Activated T-helper 2 cell treated with anti-CD3 and anti-CD28 coated beads, Interferon-gamma antibody, Interleukin-2, Interleukin-4, amounts not matched to agents 10 μg/mL and 5 μg/mL and 100 μg/mL, durations not matched to agents 14 hours and 24 hours and 36 hours (primary cell): ENCODE measurements at regions of chr16 and their contacts with region 1.

Region 1: GRCh38 chr16:89860747-89861304 is 12.6 kb upstream of the TCF25 start:
- DNase-seq: peak; percentile 75
- H3K4me3 Mint-ChIP-seq: no peak overlapping the region
- H3K27ac Mint-ChIP-seq: no peak overlapping the region
- H3K4me1 Mint-ChIP-seq: peaks cover 29% of the 10 kb centered on the region
- H3K27me3 Mint-ChIP-seq: no peaks in the 10 kb centered on the region

Region 2: DNA sequence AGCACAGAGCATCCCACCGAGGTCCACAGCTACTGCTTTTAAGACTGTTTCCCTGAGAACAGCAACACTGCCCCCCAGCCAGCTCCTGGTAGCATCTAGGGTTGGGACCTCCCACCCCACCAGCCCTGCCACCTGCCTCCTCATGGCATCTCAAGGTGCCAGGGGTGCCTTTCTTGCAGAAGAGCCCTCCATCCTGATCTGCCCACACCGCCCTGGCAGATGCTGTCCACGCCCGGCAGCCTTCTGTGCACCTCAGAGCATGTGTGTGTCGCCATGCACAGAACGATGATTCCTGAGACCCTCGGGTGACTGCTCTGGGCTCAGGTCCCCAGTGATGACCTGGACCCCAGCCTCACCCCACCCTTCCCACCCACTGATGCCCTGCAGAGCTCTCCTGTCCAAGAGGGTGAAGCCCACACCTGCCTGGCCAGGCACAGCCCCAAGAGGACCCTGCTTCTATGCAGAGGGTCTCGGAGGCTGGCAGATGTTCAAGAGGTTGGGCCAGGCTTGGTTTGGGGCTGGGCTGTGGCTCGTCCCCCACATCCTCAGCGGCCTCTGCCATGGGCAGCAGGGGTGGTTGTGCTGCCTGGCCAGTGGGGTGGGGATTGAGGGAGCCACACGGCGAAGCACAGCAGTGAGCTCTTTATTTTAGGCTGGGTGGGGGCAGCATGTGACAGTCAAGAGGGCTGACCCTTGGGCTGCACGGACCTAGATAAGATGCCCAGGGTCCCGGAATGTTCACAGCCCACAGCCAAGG is 154.1 kb before region 1 on chr16:
- intact Hi-C with region 1: loop called (anchors 1 kb)
- DNase-seq: no peak
- H3K4me3 Mint-ChIP-seq: no peak overlapping the region
- H3K27ac Mint-ChIP-seq: no peak overlapping the region
- H3K4me1 Mint-ChIP-seq: peaks cover 9% of the 10 kb centered on the region
- H3K27me3 Mint-ChIP-seq: no peaks in the 10 kb centered on the region

Region 3: DNA sequence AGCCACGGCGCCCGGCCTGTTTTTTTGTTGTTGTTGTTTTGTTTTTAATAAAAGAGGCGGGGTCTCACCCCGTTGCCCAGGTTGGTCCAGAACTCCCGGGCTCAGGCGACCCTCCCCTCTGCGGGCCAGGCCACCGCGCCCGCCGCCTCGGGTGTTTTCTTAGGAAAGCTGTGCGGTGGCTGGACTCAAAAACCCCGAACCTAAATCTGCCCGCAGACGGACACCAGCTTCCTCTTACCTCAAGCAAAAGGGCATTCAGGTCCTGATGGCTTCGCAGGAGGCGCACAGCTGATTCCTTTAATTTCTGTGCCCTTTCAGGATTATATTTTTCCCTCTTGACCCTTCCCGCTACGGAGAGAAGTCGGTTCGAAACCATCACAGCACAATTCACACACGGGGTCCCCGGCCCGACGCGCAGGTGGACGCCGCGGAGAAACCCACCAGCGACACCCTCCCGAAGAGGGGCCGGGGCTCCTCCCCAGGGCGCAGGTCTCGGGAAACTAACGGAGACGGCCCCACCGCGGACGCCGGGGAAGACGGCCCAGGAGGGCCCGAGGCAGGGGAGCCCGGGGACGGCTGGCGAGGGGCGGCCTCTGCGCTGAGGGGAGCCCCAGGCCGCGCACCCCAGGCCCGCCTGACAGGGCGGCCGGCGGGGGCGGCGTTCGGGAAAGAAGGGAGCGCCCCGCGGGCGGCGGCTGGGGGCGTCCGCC is 45.0 kb before region 1 on chr16:
- intact Hi-C with region 1: loop called (anchors 2 kb)
- DNase-seq: no peak
- H3K4me3 Mint-ChIP-seq: peak overlapping the region; percentile 87
- H3K27ac Mint-ChIP-seq: peak overlapping the region; percentile 72
- H3K4me1 Mint-ChIP-seq: peaks cover 33% of the 10 kb centered on the region
- H3K27me3 Mint-ChIP-seq: no peaks in the 10 kb centered on the region

Region 4: GRCh38 chr16:89873972-89874689 is 13.3 kb after region 1 on chr16:
- intact Hi-C with region 1: loop called (anchors 1 kb)
- DNase-seq: peak; percentile 90
- H3K4me3 Mint-ChIP-seq: peak overlapping the region; percentile 93
- H3K27ac Mint-ChIP-seq: peak overlapping the region; percentile 99
- H3K4me1 Mint-ChIP-seq: peaks cover 7% of the 10 kb centered on the region
- H3K27me3 Mint-ChIP-seq: no peaks in the 10 kb centered on the region

Region 5: GRCh38 chr16:89909777-89910716 is 49.2 kb after region 1 on chr16:
- intact Hi-C with region 1: loop called (anchors 1 kb)
- DNase-seq: peak; percentile 60
- H3K4me3 Mint-ChIP-seq: no peak overlapping the region
- H3K27ac Mint-ChIP-seq: no peak overlapping the region
- H3K4me1 Mint-ChIP-seq: no peaks in the 10 kb centered on the region
- H3K27me3 Mint-ChIP-seq: no peaks in the 10 kb centered on the region